Activated CD4-positive, alpha-beta T cell treated with anti-CD3 and anti-CD28 coated beads for 36 hours (primary cell): ENCODE measurements at regions of chr14 and their contacts with region 1.

Region 1: DNA sequence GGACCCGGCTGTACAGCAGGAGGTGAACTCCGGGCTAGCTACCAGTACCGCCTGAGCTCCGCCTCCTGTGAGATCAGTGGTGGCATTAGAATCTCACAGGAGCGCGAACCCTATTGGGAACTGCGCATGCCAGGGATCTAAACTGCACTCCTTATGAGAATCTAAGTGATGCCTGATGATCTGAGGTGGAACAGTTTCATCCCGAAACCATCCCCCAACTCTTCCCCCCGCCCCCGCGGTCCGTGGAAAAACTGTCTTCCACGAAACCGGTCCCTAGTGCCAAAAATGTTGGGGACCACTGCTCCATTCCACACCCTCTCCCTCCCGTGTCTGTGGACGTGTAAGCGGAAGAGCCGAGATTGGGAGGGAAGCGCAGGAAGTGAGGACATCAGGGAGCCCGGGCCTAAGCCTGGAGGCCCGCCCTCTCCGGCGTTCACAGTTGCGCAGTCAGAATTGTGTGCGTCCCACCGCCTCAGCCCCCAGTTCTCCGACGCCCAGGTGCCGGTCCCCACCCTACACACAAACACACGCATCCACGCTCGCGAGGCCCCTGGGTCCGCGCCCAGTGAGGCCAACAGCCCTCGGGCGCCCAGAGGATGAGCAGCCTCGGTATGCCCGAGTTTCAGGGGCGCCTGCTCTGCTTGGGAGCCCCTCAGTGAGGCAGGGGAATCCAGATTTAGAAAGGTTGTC is 1.8 kb upstream of the RNASE4 start:
- DNase-seq: peak; percentile 88
- ATAC-seq: peak; percentile 68
- H3K4me3 Mint-ChIP-seq: no peak overlapping the region
- H3K27ac Mint-ChIP-seq: no peak overlapping the region
- H3K4me1 Mint-ChIP-seq: peaks cover 30% of the 10 kb centered on the region
- H3K27me3 Mint-ChIP-seq: no peaks in the 10 kb centered on the region

Region 2: GRCh38 chr14:20343092-20343861 is 339.3 kb before region 1 on chr14 and contains the start of gene PARP2:
- CTCF ChIA-PET with region 1: interaction called, 9 read pairs
- POLR2A ChIA-PET with region 1: interaction called, 7 read pairs
- intact Hi-C with region 1: loop called (anchors 1 to 2 kb)
- DNase-seq: peak; percentile 97
- ATAC-seq: peak; percentile 95
- H3K4me3 Mint-ChIP-seq: peak within 1 kb of the TSS; percentile 89
- H3K27ac Mint-ChIP-seq: peak within 1 kb of the TSS; percentile 92
- H3K4me1 Mint-ChIP-seq: peaks cover 20% of the 10 kb centered on the region
- H3K27me3 Mint-ChIP-seq: no peaks in the 10 kb centered on the region
- total RNA-seq, gene PARP2: 39.4 to 41.8 TPM

Region 3: GRCh38 chr14:20494935-20495766 is 187.4 kb before region 1 on chr14:
- CTCF ChIA-PET with region 1: no interaction called
- POLR2A ChIA-PET with region 1: no interaction called
- intact Hi-C with region 1: loop called in 1 of 2 experiments (anchors 5 kb)
- DNase-seq: no peak
- ATAC-seq: peak; percentile 73
- H3K4me3 Mint-ChIP-seq: no peak overlapping the region
- H3K27ac Mint-ChIP-seq: peak overlapping the region; percentile 64
- H3K4me1 Mint-ChIP-seq: peaks cover 55% of the 10 kb centered on the region
- H3K27me3 Mint-ChIP-seq: no peaks in the 10 kb centered on the region

Region 4: DNA sequence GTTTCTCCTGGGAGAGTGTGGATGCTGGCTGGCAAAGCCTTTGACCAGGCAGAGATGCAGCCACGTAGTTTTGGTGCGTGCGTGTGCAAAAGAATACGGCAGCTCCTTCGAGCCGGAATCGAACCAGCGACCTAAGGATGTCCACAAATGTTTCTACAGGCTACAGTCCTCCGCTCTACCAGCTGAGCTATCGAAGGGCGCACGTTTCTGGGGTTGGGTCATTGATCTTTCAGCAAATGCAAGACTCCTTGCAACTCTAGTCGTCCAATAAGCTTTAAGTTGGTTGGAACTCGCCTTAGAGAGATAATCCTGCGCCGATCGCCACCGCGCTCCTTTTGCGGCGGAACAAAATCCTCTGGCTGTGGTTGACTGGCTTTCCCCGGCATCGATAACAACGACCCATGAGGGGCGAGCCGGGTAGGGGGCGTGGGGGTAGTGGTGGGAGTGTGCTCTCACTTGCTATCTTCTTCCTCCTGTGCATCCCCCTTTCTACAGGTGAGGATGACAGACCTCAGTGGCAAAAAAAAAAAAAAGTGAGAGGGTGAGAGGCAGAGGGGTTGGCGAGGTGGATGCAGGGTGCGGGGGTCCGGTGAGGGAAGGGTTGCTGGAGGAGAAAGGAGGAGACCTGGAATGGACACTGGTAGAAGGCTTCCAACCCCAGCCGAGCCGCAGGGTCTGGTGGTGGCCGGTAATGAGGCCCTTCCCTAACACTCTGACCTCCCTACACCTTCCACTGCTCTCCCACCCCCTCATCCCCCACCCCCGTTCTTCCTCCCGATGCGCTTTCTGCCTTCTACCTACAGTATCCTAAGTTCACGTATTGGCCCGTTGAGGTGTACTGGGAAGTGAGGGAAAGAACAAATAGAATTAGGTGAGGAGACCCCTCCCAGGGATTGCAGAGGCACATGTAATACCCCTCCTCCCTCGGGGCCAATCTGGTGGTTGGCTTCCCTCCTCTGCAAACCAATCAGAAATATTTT is 29.3 kb before region 1 on chr14:
- CTCF ChIA-PET with region 1: interaction called, 10 read pairs
- POLR2A ChIA-PET with region 1: no interaction called
- intact Hi-C with region 1: loop called in 1 of 2 experiments (anchors 1 kb)
- DNase-seq: peak; percentile 86
- ATAC-seq: peak; percentile 88
- H3K4me3 Mint-ChIP-seq: peak overlapping the region; percentile 66
- H3K27ac Mint-ChIP-seq: no peak overlapping the region
- H3K4me1 Mint-ChIP-seq: peaks cover 16% of the 10 kb centered on the region
- H3K27me3 Mint-ChIP-seq: peaks cover 56% of the 10 kb centered on the region

Region 5: GRCh38 chr14:20989572-20990551 is 307.3 kb after region 1 on chr14 and contains the start of gene METTL17:
- CTCF ChIA-PET with region 1: no interaction called
- POLR2A ChIA-PET with region 1: no interaction called
- intact Hi-C with region 1: loop called in 1 of 2 experiments (anchors 1 kb)
- DNase-seq: peak; percentile 93
- ATAC-seq: peak; percentile 97
- H3K4me3 Mint-ChIP-seq: peak within 1 kb of the TSS; percentile 92
- H3K27ac Mint-ChIP-seq: peak within 1 kb of the TSS; percentile 89
- H3K4me1 Mint-ChIP-seq: peaks cover 37% of the 10 kb centered on the region
- H3K27me3 Mint-ChIP-seq: no peaks in the 10 kb centered on the region
- total RNA-seq, gene METTL17: 89.3 to 90.0 TPM

Region 6: DNA sequence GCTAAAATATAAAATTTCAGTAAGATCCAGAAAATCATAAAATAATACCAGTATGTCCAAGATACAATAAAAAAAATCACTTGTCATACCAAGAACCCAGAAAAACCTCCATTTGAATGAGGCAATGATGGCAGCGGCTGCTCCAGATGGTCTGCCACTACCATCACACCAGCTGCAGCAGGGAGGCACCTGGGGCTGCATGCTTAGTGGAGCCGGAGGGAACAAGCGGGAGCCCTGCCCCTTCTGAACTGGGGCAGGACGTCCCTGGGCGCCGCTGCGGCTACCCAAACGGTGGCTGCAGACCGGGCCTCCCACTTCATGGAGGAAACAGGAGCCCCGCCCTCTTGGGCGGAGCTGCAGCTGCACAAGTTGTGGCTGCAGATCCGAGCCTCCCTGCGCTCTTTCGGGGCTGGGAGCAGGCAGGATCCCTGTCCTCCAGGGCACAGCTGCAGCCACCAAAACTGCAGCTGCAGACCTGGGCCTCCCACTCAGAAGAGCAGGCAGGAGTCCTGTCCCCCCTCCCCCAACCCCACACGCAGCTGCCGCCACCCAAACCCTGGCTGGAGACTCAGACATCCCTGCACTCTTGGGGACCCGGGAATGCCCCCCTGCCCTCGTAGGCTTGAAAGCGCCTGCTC is 509.3 kb after region 1 on chr14:
- CTCF ChIA-PET with region 1: no interaction called
- POLR2A ChIA-PET with region 1: no interaction called
- intact Hi-C with region 1: no loop called
- DNase-seq: peak; percentile 82
- ATAC-seq: peak; percentile 94
- H3K4me3 Mint-ChIP-seq: peak overlapping the region; percentile 53
- H3K27ac Mint-ChIP-seq: peak overlapping the region; percentile 13
- H3K4me1 Mint-ChIP-seq: peaks cover 4% of the 10 kb centered on the region
- H3K27me3 Mint-ChIP-seq: no peaks in the 10 kb centered on the region